Activated CD4-positive, alpha-beta memory T cell treated with anti-CD3 and anti-CD28 coated beads for 36 hours (primary cell): ENCODE measurements at regions of chr4 and their contacts with region 1.

Region 1: DNA sequence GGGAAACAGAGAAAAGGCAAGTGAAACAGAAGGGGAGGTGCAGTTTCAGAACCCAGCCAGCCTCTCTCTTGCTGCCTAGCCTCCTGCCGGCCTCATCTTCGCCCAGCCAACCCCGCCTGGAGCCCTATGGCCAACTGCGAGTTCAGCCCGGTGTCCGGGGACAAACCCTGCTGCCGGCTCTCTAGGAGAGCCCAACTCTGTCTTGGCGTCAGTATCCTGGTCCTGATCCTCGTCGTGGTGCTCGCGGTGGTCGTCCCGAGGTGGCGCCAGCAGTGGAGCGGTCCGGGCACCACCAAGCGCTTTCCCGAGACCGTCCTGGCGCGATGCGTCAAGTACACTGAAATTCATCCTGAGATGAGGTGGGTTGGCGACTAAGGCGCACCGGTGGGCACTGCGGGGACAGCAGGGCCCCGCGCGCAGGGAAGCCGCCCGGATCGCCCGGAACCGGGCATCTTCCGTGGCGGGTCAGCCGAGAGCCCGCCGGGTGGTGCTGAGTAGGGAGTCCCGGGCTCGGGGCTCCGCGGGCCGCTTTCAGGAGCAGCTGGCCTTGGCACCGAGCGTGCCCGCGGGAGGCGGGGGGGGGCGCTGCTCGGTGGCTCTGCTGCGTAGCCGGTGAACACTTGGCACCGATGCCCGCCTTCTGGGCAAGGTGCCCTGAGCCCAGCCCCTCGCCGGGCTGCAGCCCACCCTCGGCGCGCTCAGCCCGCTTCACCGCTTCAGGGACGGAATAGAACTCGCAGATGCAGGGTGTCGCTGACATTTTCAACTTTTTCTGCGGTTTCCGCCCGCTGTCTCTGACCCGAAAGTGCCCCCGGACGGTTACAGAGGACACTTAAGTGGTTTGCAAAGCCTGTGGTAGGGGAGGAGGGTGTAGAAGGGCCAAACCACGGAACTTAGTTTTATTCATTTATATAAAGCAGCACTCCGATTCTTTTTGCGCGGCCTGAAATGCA is at the start of gene CD38:
- DNase-seq: peak; percentile 74
- H3K4me3 Mint-ChIP-seq: peak within 1 kb of the TSS; percentile 83
- H3K27ac Mint-ChIP-seq: peak within 1 kb of the TSS; percentile 72
- H3K4me1 Mint-ChIP-seq: peaks cover 47% of the 10 kb centered on the region
- H3K27me3 Mint-ChIP-seq: peaks cover 26% of the 10 kb centered on the region
- total RNA-seq, gene CD38: 11.6 to 12.0 TPM

Region 2: GRCh38 chr4:15231265-15232091 is 547.1 kb before region 1 on chr4:
- CTCF ChIA-PET with region 1: no interaction called
- POLR2A ChIA-PET with region 1: no interaction called
- intact Hi-C with region 1: loop called (anchors 5 kb)
- DNase-seq: peak; percentile 81
- H3K4me3 Mint-ChIP-seq: no peak overlapping the region
- H3K27ac Mint-ChIP-seq: no peak overlapping the region
- H3K4me1 Mint-ChIP-seq: peaks cover 28% of the 10 kb centered on the region
- H3K27me3 Mint-ChIP-seq: no peaks in the 10 kb centered on the region

Region 3: DNA sequence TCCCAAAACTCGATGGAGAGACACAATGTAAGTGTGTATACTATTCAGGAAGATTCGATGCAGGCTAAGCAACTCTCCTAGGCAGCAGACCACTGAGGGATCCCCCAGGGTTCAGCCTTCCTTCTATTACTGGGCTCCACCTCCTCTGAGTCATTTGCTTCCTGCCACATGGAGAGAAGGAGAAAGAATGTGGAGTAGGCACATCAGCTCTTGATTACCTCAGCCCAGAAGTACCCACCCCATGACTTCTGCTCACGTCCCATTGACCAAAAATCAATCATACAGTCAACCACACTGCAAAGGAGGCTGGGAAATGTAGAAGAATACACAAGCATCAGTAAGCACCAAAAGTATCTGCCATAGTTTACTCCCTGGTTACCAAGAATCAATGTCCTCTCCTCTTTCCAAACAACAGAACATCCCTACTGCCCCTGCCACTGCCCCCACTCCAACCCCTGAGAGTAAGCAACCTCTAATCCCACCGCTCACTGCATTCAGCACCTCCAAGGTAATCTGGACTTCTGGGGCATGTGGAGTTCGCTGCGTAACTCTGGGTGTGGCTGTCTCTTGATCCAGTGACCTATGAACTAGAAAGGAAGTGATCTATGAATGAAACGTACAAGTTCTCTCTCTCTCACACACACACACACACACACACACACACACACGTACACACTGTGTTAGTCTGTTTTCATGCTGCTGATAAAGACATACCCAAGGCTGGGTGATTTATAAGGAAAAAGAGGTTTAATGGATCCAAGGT is 442.0 kb before region 1 on chr4:
- CTCF ChIA-PET with region 1: no interaction called
- POLR2A ChIA-PET with region 1: no interaction called
- intact Hi-C with region 1: no loop called
- DNase-seq: no peak
- H3K4me3 Mint-ChIP-seq: no peak overlapping the region
- H3K27ac Mint-ChIP-seq: no peak overlapping the region
- H3K4me1 Mint-ChIP-seq: no peaks in the 10 kb centered on the region
- H3K27me3 Mint-ChIP-seq: peaks cover 1% of the 10 kb centered on the region

Region 4: DNA sequence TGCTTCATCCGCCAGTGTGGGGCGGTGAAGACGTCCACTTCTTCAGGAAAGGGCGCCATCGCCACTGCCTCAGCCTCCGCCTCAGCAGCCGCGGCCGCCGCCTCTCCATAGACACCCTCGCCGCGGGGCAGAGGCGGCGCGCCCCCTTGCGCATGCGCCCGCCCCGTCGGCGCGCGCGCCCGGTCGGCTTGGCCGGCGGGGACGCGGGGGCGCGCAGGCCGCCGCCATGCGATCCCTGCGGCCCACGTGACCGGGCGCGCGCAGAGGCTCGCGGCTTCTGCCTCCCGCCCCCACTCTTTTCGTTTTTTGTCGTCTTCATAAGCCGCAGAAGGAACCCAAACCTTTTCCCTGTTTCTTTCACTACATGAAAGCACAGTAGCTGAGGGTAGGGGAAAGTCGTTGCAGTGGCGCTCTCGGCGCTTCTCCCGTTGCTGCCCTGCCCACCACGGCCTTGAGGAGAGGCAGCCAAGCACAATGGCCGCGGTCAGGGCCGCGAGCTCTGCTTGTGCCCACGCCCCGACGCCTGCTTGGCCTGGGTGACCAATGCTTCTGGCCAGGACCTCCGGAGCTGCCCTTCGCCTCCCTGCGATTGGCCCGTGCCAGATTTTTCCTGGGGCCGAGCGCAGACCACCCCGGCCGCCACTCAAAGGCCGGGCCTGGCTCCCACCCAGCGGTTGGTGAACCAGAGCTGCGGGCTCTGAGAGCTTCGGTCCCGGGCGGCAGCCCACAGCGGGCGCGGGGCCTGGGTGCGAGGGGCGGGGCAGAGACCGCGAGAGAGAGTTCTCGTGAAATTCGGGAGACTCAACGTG is 123.1 kb before region 1 on chr4 and contains the start of gene FBXL5:
- CTCF ChIA-PET with region 1: interaction called, 3 read pairs
- POLR2A ChIA-PET with region 1: no interaction called
- intact Hi-C with region 1: loop called (anchors 2 kb)
- DNase-seq: peak; percentile 89
- H3K4me3 Mint-ChIP-seq: peak within 1 kb of the TSS; percentile 93
- H3K27ac Mint-ChIP-seq: peak within 1 kb of the TSS; percentile 94
- H3K4me1 Mint-ChIP-seq: peaks cover 61% of the 10 kb centered on the region
- H3K27me3 Mint-ChIP-seq: no peaks in the 10 kb centered on the region
- total RNA-seq, gene FBXL5: 26.5 to 30.4 TPM

Region 5: DNA sequence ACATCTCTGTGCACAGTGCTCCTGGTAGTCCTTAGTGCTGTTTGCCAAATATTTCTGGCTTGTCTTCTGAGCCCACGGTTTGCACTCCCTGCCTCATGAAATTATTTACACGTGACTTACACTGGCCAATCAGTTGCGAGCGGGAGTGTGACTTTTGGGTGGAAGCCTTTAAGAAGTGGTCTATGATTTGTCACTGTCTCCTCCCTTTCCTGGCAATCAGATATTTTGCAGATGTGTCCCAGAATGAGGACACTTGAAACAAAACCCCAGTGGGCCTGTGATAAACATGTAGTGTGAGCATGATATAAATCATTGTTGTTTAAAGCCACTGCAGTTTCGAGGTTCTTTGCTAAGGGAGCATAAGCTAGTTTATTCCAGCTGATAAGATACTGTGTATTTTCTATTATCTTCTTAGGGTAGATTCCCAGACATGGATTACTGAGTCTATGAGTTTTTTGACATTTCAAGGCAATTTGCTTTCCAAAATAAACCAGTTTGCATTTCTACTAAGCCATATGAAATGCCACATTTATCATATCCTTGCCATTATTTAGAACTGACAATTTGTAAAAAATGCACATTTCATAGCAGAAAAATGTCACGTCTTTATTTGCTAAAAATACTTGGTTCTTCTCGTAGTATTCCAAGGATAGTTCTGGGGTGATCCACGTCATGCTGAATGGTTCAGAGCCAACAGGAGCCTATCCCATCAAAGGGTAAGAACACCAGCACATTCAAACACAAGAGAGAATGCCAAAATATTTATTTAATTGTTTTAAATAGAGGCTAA is 63.7 kb before region 1 on chr4:
- CTCF ChIA-PET with region 1: no interaction called
- POLR2A ChIA-PET with region 1: no interaction called
- intact Hi-C with region 1: no loop called
- DNase-seq: no peak
- H3K4me3 Mint-ChIP-seq: no peak overlapping the region
- H3K27ac Mint-ChIP-seq: no peak overlapping the region
- H3K4me1 Mint-ChIP-seq: peaks cover 3% of the 10 kb centered on the region
- H3K27me3 Mint-ChIP-seq: no peaks in the 10 kb centered on the region

Region 6: DNA sequence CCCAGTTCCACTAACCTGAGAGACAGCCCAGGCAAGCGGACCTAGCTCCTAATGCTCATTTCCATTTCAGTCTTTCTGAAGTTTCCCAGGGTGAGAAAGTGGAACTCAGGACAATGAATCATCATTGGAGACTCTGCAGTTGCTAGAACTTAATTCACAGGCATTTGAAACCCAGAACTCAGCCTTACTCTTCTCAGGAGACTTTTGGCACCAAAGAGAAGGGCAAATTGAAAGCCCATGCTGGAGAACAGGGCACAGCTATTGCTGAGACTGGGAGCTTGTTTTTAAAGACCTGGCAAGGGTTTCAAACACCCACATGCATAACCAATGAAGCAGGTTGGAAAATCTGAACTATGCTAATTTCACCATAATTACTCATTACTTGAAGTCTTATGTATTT is 39.7 kb before region 1 on chr4:
- CTCF ChIA-PET with region 1: interaction called, 4 read pairs
- POLR2A ChIA-PET with region 1: interaction called, 4 read pairs
- intact Hi-C with region 1: loop called (anchors 1 kb)
- DNase-seq: peak; percentile 19
- H3K4me3 Mint-ChIP-seq: no peak overlapping the region
- H3K27ac Mint-ChIP-seq: peak overlapping the region; percentile 24
- H3K4me1 Mint-ChIP-seq: peaks cover 31% of the 10 kb centered on the region
- H3K27me3 Mint-ChIP-seq: no peaks in the 10 kb centered on the region

Region 7: DNA sequence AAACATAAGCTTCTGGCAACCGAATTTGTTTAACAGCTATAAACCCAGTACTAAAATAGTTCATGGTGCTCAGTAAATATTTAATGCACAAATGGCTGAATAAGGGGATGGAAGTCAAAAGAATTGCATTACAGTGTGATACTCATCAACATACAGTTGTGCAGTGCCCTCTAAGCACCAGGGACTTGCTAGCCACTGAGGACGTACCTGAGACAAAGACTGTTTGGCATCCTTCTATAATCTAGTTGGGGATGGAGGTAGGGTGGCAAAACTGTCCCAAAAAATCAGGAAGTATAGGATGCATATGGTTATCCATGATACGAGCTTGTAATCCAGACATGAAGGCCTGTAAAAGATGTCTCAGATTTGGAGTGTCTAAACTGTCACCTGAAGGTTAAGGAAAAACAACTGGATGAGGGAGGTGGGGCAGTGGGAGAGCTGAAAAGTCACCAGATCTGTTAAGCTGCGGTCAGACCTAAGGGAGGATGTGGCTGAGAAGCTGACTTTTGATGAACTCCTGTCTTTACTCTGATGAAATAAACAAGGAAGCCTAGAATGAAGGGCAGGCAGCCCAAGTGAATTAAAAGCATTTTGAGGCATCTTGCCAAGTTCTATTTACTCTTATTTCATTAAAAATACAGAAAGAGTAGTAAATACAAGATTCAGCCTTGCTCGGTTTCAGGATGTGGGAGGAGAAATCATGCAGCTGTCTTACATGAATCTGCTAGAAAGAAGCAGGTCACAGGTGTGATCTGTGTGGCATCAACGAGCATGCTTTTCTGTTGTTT is 12.5 kb before region 1 on chr4:
- CTCF ChIA-PET with region 1: interaction called, 5 read pairs
- POLR2A ChIA-PET with region 1: interaction called, 6 read pairs
- intact Hi-C with region 1: loop called (anchors 1 kb)
- DNase-seq: peak; percentile 65
- H3K4me3 Mint-ChIP-seq: peak overlapping the region; percentile 10
- H3K27ac Mint-ChIP-seq: peak overlapping the region; percentile 74
- H3K4me1 Mint-ChIP-seq: peaks cover 43% of the 10 kb centered on the region
- H3K27me3 Mint-ChIP-seq: peaks cover 2% of the 10 kb centered on the region

Region 8: GRCh38 chr4:15811703-15812337 is 33.3 kb after region 1 on chr4:
- CTCF ChIA-PET with region 1: no interaction called
- POLR2A ChIA-PET with region 1: no interaction called
- intact Hi-C with region 1: no loop called
- DNase-seq: no peak
- H3K4me3 Mint-ChIP-seq: no peak overlapping the region
- H3K27ac Mint-ChIP-seq: no peak overlapping the region
- H3K4me1 Mint-ChIP-seq: peaks cover 12% of the 10 kb centered on the region
- H3K27me3 Mint-ChIP-seq: no peaks in the 10 kb centered on the region

Region 9: GRCh38 chr4:15836362-15836761 is 57.8 kb after region 1 on chr4:
- CTCF ChIA-PET with region 1: no interaction called
- POLR2A ChIA-PET with region 1: no interaction called
- intact Hi-C with region 1: loop called (anchors 1 kb)
- DNase-seq: no peak
- H3K4me3 Mint-ChIP-seq: no peak overlapping the region
- H3K27ac Mint-ChIP-seq: no peak overlapping the region
- H3K4me1 Mint-ChIP-seq: peaks cover 7% of the 10 kb centered on the region
- H3K27me3 Mint-ChIP-seq: no peaks in the 10 kb centered on the region